Naive thymus-derived CD4-positive, alpha-beta T cell (primary cell): ENCODE measurements at regions of chr14 and their contacts with region 1.

Region 1: GRCh38 chr14:75002392-75003249 is at the start of gene EIF2B2:
- DNase-seq: peak; percentile 90 to 100 (median 99)
- ATAC-seq: peak; percentile 97
- H3K4me3 ChIP-seq: peak within 1 kb of the TSS; percentile 93
- H3K4me3 Mint-ChIP-seq: peak within 1 kb of the TSS; percentile 78 to 99 (median 94)
- H3K27ac ChIP-seq: peak within 1 kb of the TSS; percentile 91
- H3K27ac Mint-ChIP-seq: peak within 1 kb of the TSS; percentile 95 to 100 (median 97)
- H3K4me1 ChIP-seq: peaks cover 15 to 23% of the 10 kb centered on the region in 2 donors
- H3K4me1 Mint-ChIP-seq: peaks cover 23 to 50% (median 44%) of the 10 kb centered on the region in 7 donors
- H3K27me3 ChIP-seq: no peaks in the 10 kb centered on the region
- H3K27me3 Mint-ChIP-seq: peaks cover 0 to 5% (median 0%) of the 10 kb centered on the region in 5 donors
- total RNA-seq, gene EIF2B2: 23.8 to 40.7 (median 26.1) TPM

Region 2: GRCh38 chr14:74493343-74494261 is 509.0 kb before region 1 on chr14 and contains the start of gene ISCA2:
- CTCF ChIA-PET with region 1: no interaction called
- POLR2A ChIA-PET with region 1: no interaction called
- intact Hi-C with region 1: loop called (anchors 1 to 5 kb)
- DNase-seq: peak; percentile 95 to 99 (median 98)
- ATAC-seq: peak; percentile 94
- H3K4me3 ChIP-seq: peak within 1 kb of the TSS; percentile 96
- H3K4me3 Mint-ChIP-seq: peak within 1 kb of the TSS in 1 of 10 donors; percentile 89
- H3K27ac ChIP-seq: peak within 1 kb of the TSS; percentile 91
- H3K27ac Mint-ChIP-seq: peak within 1 kb of the TSS in 7 of 9 donors; percentile 87 to 96 (median 91)
- H3K4me1 ChIP-seq: peaks cover 12 to 18% of the 10 kb centered on the region in 2 donors
- H3K4me1 Mint-ChIP-seq: peaks cover 7 to 45% (median 37%) of the 10 kb centered on the region in 7 donors
- H3K27me3 ChIP-seq: no peaks in the 10 kb centered on the region
- H3K27me3 Mint-ChIP-seq: no peaks in the 10 kb centered on the region
- total RNA-seq, gene ISCA2: 13.9 to 39.5 (median 25.2) TPM

Region 3: DNA sequence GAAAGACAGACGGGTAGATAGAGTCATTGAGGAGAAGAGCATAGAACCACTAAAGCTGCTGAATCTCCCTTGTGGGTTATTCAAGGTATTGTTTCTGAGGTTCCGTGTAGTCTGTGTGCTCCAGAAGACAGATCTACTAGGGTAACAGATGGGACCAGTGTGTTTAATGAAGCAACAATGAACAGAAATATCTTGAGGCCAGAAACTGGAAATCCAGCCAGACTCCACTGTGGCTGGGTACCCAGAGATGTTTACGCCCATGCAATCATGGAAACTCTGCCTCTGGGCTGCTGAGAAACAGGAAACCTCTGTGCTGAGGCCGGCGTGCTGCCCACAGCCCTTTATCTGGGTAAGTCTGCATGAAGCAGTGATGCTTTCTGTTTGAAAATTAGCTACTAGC is 134.9 kb before region 1 on chr14:
- CTCF ChIA-PET with region 1: no interaction called
- POLR2A ChIA-PET with region 1: no interaction called
- intact Hi-C with region 1: loop called in 1 of 2 experiments (anchors 5 kb)
- DNase-seq: peak in 6 of 9 donors; percentile 32 to 51 (median 37)
- ATAC-seq: peak; percentile 87
- H3K4me3 ChIP-seq: peak overlapping the region; percentile 27
- H3K4me3 Mint-ChIP-seq: peak overlapping the region; percentile 0 to 60 (median 39)
- H3K27ac ChIP-seq: peak overlapping the region; percentile 40
- H3K27ac Mint-ChIP-seq: peak overlapping the region in 7 of 9 donors; percentile 4 to 77 (median 45)
- H3K4me1 ChIP-seq: peaks cover 11 to 15% of the 10 kb centered on the region in 2 donors
- H3K4me1 Mint-ChIP-seq: peaks cover 17 to 31% (median 24%) of the 10 kb centered on the region in 7 donors
- H3K27me3 ChIP-seq: no peaks in the 10 kb centered on the region
- H3K27me3 Mint-ChIP-seq: peaks cover 0 to 2% (median 0%) of the 10 kb centered on the region in 5 donors

Region 4: GRCh38 chr14:74945823-74946682 is 56.6 kb before region 1 on chr14:
- CTCF ChIA-PET with region 1: no interaction called
- POLR2A ChIA-PET with region 1: no interaction called
- intact Hi-C with region 1: loop called (anchors 1 kb)
- DNase-seq: peak; percentile 41 to 79 (median 61)
- ATAC-seq: peak; percentile 78
- H3K4me3 ChIP-seq: no peak overlapping the region
- H3K4me3 Mint-ChIP-seq: peak overlapping the region in 6 of 10 donors; percentile 32 to 67 (median 55)
- H3K27ac ChIP-seq: no peak overlapping the region
- H3K27ac Mint-ChIP-seq: peak overlapping the region in 8 of 9 donors; percentile 17 to 93 (median 52)
- H3K4me1 ChIP-seq: peaks cover 19 to 21% of the 10 kb centered on the region in 2 donors
- H3K4me1 Mint-ChIP-seq: peaks cover 21 to 35% (median 33%) of the 10 kb centered on the region in 7 donors
- H3K27me3 ChIP-seq: no peaks in the 10 kb centered on the region
- H3K27me3 Mint-ChIP-seq: no peaks in the 10 kb centered on the region

Region 5: DNA sequence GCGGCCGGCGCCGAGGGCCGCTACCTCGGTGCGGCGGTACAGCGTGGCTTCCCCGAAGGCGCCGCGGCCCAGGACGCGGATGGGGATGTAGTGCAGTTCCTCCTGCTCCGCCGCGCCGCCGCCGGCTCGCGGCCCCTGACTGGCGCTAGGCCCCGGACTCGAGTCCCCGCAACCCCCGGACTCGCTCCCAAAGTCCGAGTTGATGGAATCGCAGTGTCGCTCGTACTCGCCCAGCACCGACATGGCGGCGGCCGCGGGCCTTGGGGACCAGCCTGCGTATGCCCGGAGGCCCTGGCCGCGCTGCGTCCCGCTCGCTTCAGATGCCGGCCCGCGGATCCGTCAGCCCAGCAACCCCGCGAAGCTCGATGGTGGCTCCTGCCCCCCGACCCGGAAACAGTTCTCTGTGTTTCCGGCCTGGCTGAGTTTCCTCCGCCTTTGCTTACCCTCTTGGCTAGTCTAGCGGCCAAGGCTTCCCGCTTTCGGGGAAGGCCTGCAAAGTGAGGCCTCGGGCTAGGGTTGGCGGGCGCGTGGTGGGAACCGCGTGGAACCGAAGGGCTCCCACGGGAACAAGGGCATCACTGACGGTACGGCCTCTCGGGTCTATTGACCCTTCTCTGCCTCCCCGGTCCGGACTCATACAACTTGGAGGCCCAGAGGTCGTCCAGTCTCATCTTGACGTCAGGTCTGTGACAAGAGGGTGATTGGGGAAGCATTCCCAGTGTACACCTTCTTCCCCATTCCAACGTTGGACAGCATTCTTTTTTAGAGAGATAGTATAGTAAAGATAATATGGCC is 124.3 kb after region 1 on chr14 and contains the start of gene NEK9:
- CTCF ChIA-PET with region 1: no interaction called
- POLR2A ChIA-PET with region 1: no interaction called
- intact Hi-C with region 1: loop called in 1 of 2 experiments (anchors 1 kb)
- DNase-seq: peak; percentile 78 to 91 (median 87)
- ATAC-seq: peak; percentile 92
- H3K4me3 ChIP-seq: peak within 1 kb of the TSS; percentile 87
- H3K4me3 Mint-ChIP-seq: peak within 1 kb of the TSS; percentile 87 to 99 (median 96)
- H3K27ac ChIP-seq: peak within 1 kb of the TSS; percentile 89
- H3K27ac Mint-ChIP-seq: peak within 1 kb of the TSS; percentile 95 to 98 (median 98)
- H3K4me1 ChIP-seq: peaks cover 22 to 29% of the 10 kb centered on the region in 2 donors
- H3K4me1 Mint-ChIP-seq: peaks cover 36 to 48% (median 44%) of the 10 kb centered on the region in 7 donors
- H3K27me3 ChIP-seq: no peaks in the 10 kb centered on the region
- H3K27me3 Mint-ChIP-seq: no peaks in the 10 kb centered on the region
- total RNA-seq, gene NEK9: 81.7 to 141 (median 84.7) TPM

Region 6: DNA sequence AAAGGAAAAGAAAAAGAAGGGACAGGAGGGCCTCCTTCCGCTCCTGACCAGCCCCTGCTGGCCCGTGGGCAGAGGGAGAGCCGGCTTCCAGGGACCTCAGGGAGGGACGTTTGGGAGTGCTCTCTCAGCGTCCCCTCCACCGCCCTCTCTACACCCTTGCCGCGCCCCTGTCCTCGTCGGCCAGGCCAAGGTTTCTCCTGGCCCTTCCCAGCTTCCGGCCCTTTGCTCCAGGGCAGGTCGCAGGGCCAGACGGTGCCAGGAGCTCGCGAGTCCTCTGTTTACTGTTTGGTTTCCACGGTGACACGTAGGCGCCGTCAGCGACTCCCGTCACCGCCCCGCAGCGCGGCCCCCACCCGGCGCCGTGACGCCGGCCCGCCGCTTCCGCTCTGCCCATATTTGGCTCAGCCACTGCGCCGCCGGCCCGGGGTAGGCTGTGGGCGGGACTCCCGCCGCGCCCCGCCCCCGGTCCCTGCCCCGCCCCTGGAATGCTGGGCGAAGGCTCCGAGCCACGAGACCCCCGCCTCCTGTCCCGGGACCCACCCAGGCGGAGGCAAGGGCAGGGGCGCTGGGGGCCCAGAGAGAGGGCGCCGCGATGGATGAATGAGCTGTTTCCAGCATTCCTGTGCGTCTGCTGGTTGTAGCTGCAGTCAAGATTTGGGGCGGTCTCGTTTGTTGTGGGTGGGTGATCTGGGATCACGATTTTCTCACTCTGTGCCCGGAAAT is 291.5 kb after region 1 on chr14:
- CTCF ChIA-PET with region 1: no interaction called
- POLR2A ChIA-PET with region 1: no interaction called
- intact Hi-C with region 1: loop called in 1 of 2 experiments (anchors 1 kb)
- DNase-seq: peak; percentile 92 to 98 (median 96)
- ATAC-seq: peak; percentile 92
- H3K4me3 ChIP-seq: peak overlapping the region; percentile 61
- H3K4me3 Mint-ChIP-seq: peak overlapping the region; percentile 79 to 93 (median 91)
- H3K27ac ChIP-seq: peak overlapping the region; percentile 96
- H3K27ac Mint-ChIP-seq: peak overlapping the region; percentile 85 to 97 (median 94)
- H3K4me1 ChIP-seq: peaks cover 17 to 25% of the 10 kb centered on the region in 2 donors
- H3K4me1 Mint-ChIP-seq: peaks cover 10 to 26% (median 22%) of the 10 kb centered on the region in 7 donors
- H3K27me3 ChIP-seq: no peaks in the 10 kb centered on the region
- H3K27me3 Mint-ChIP-seq: peaks cover 0 to 24% (median 0%) of the 10 kb centered on the region in 5 donors